ENCODE measurements at regions of chr7 and their contacts with region 1.

Region 1: GRCh38 chr7:92447345-92448204 is at the start of gene GATAD1:
- DNase-seq: peak; percentile 89
- ATAC-seq: peak; percentile 98
- H3K4me3 ChIP-seq: peak within 1 kb of the TSS; percentile 73 to 98 (median 88)
- H3K27ac ChIP-seq: peak within 1 kb of the TSS; percentile 93
- H3K4me1 ChIP-seq: peaks cover 45% of the 10 kb centered on the region
- H3K27me3 ChIP-seq: no peaks in the 10 kb centered on the region
- CTCF ChIP-seq: peak; percentile 95
- EP300 ChIP-seq: no peak
- POLR2A ChIP-seq: peak; percentile 87 to 91
- RAD21 ChIP-seq: peak; percentile 92
- total RNA-seq, gene GATAD1: 16.2 and 20.6 TPM in 2 replicates

Region 2: GRCh38 chr7:92134271-92135051 is 313.1 kb before region 1 on chr7 and contains the start of gene CYP51A1:
- CTCF ChIA-PET with region 1: no interaction called
- POLR2A ChIA-PET with region 1: interaction called, 7 read pairs
- in situ Hi-C with region 1: no loop called
- intact Hi-C with region 1: loop called (anchors 5 kb)
- DNase-seq: peak; percentile 84
- ATAC-seq: peak; percentile 91
- H3K4me3 ChIP-seq: peak within 1 kb of the TSS; percentile 95 to 100 (median 98)
- H3K27ac ChIP-seq: peak within 1 kb of the TSS; percentile 98
- H3K4me1 ChIP-seq: peaks cover 47% of the 10 kb centered on the region
- H3K27me3 ChIP-seq: no peaks in the 10 kb centered on the region; a peak in 1 of 5 replicates
- CTCF ChIP-seq: peak; percentile 28; the same call in 1 of the 2 replicates
- EP300 ChIP-seq: no peak; a peak in 1 of 4 replicates
- POLR2A ChIP-seq: peak; percentile 84 to 93
- RAD21 ChIP-seq: peak; percentile 45; the same call in 1 of the 2 replicates
- total RNA-seq, gene CYP51A1: 194 and 260 TPM in 2 replicates

Region 3: GRCh38 chr7:92245487-92246362 is 201.8 kb before region 1 on chr7 and contains the starts of genes ANKIB1 and KRIT1:
- CTCF ChIA-PET with region 1: no interaction called
- POLR2A ChIA-PET with region 1: interaction called, 22 read pairs
- in situ Hi-C with region 1: no loop called
- intact Hi-C with region 1: loop called (anchors 2 kb)
- DNase-seq: peak; percentile 86
- ATAC-seq: peak; percentile 92
- H3K4me3 ChIP-seq: peak within 1 kb of the TSS; percentile 79 to 98 (median 93)
- H3K27ac ChIP-seq: peak within 1 kb of the TSS; percentile 99
- H3K4me1 ChIP-seq: peaks cover 35% of the 10 kb centered on the region
- H3K27me3 ChIP-seq: no peaks in the 10 kb centered on the region; a peak in 1 of 5 replicates
- CTCF ChIP-seq: peak; percentile 20; the same call in 1 of the 2 replicates
- EP300 ChIP-seq: no peak; a peak in 1 of 4 replicates
- POLR2A ChIP-seq: peak; percentile 67 to 69
- RAD21 ChIP-seq: peak; percentile 52
- total RNA-seq, gene ANKIB1: 26.6 and 29.6 TPM in 2 replicates
- total RNA-seq, gene KRIT1: 29.4 and 31.2 TPM in 2 replicates

Region 4: DNA sequence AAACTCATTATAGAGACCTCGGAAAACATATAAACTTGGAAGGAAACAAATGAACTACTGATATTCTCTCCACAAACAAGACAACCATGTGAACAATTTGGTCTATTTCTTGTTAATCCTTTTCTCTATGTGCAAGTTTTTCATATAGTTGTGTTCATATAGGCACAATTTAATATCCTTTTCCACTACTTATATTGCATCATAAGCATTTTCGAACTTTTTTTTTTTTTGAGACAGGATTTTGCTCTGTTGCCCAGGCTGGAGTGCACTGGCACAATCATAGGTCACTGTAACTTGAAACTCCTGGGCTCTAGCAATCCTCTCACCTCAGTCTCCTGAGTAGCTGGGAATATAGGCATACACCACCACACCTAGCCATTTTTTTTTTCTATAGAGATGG is 75.5 kb after region 1 on chr7:
- CTCF ChIA-PET with region 1: no interaction called
- POLR2A ChIA-PET with region 1: interaction called, 19 read pairs
- in situ Hi-C with region 1: no loop called
- intact Hi-C with region 1: loop called (anchors 2 kb)
- DNase-seq: no peak
- ATAC-seq: no peak
- H3K4me3 ChIP-seq: no peak overlapping the region
- H3K27ac ChIP-seq: no peak overlapping the region
- H3K4me1 ChIP-seq: peaks cover 21% of the 10 kb centered on the region
- H3K27me3 ChIP-seq: no peaks in the 10 kb centered on the region; a peak in 1 of 5 replicates
- CTCF ChIP-seq: no peak
- EP300 ChIP-seq: no peak
- POLR2A ChIP-seq: no peak
- RAD21 ChIP-seq: no peak

Region 5: DNA sequence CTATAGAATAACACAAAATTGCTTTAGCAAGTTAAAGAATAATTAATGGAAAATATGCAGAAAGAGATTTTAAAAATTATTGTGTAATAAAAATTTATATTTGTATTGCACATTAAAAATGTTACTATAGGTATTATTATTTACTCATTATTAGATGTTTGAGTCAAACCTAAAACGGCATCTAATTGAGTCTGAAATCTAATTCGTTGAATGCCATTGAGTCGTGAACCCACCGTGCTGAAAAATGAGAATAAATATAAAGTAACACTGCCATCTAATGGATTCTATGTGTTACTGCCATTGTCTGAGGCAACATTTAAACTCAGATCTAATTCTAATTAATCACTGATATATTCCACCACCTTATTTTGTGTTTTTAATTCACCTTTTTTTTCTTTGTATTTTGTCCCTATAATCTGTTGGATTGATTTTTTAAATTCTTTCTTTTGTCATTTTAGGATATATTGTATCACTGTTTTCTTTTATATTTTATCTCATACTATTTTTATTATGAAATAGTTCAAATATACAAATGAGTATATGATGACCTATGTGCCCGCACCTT is 608.0 kb after region 1 on chr7:
- CTCF ChIA-PET with region 1: no interaction called
- POLR2A ChIA-PET with region 1: no interaction called
- in situ Hi-C with region 1: loop called (anchors 25 kb)
- intact Hi-C with region 1: no loop called
- DNase-seq: peak; percentile 34
- ATAC-seq: no peak
- H3K4me3 ChIP-seq: no peak overlapping the region
- H3K27ac ChIP-seq: no peak overlapping the region
- H3K4me1 ChIP-seq: peaks cover 10% of the 10 kb centered on the region; the same call in 1 of the 2 replicates
- H3K27me3 ChIP-seq: peaks cover 0 to 3% of the 10 kb centered on the region in 2 experiments; a peak in 1 of 5 replicates
- CTCF ChIP-seq: peak; percentile 70
- EP300 ChIP-seq: no peak
- POLR2A ChIP-seq: no peak
- RAD21 ChIP-seq: peak; percentile 58

Measured in HepG2 (cell line).